Activated T-helper 1 cell treated with anti-CD3 and anti-CD28 coated beads, Interleukin-12 subunit alpha, Interleukin-12 subunit beta, Interleukin-2, Interleukin-4 antibody, amounts not matched to agents 30 ng/mL and 10 ng/mL and 1 ng/mL, durations not matched to agents 14 hours and 24 hours and 36 hours (primary cell): ENCODE measurements at regions of chr1 and their contacts with region 1.

Region 1: DNA sequence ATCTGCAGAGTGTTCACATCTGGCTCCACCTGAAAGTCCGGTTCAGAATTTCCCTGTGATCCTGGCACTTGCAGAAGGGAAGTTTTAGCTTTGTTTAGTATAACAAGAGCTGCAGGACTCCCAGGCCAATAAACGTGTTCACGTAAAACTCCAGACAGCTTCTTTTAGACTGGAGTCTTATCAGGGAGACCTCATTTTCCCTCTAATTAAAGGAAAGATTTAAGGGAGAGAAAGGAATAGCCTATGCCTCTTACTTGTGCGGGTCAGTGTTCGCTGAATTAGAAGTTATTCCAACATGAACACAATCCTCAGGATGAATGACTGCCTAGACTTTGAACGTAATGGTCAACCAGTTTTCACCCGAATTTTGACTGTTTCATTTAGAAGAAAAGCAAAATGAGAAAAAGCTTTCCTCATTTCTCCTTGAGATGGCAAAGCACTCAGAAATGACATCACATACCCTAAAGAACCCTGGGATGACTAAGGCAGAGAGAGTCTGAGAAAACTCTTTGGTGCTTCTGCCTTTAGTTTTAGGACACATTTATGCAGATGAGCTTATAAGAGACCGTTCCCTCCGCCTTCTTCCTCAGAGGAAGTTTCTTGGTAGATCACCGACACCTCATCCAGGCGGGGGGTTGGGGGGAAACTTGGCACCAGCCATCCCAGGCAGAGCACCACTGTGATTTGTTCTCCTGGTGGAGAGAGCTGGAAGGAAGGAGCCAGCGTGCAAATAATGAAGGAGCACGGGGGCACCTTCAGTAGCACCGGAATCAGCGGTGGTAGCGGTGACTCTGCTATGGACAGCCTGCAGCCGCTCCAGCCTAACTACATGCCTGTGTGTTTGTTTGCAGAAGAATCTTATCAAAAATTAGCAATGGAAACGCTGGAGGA is 202.1 kb upstream of the SGIP1 start:
- DNase-seq: peak; percentile 35
- H3K4me3 Mint-ChIP-seq: peak overlapping the region; percentile 98
- H3K27ac Mint-ChIP-seq: peak overlapping the region; percentile 95
- H3K4me1 Mint-ChIP-seq: peaks cover 60% of the 10 kb centered on the region
- H3K27me3 Mint-ChIP-seq: no peaks in the 10 kb centered on the region

Region 2: DNA sequence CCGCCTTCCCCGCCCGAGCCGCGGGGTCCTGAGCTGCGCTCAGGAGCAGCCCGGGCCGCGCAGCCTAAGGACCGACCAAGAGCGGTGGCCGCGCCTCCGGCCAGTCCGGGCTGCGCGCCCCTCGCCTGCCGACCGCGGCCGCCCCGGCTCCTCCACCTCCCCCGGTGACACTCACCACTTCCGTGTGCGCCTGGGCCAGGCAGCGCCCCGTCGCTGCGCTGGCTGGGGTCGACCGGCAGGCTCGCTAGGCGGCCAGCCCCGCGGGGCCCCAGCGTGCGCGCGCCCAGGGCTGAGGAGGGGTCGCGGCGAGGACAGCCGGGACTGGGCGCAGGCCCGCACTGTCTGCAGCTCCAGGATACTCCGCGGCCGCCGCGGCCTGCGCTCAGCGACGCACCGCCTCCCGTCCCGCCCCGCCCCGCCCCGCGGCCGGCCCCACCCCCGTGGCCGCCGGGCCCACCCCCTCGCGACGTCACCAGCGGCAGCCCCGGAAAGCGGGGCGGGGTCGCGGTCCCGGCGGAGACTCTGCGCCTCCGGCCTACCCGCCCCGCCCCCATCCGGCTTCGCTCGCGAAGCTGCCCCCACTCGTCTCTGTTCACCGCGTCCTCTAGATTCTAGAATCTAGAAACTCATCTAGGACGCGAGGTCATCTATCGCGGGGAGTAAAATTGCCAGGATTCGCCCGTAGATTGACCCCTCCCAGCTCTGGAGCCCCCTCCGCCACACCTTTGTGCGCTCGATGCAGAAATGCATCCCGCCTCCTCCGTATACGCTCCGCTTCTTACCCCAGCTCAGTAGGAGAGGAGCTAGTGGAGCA is 1365.5 kb before region 1 on chr1 and contains the start of gene JAK1:
- intact Hi-C with region 1: loop called (anchors 10 kb)
- DNase-seq: peak; percentile 81
- H3K4me3 Mint-ChIP-seq: peak within 1 kb of the TSS; percentile 93
- H3K27ac Mint-ChIP-seq: peak within 1 kb of the TSS; percentile 88
- H3K4me1 Mint-ChIP-seq: peaks cover 55% of the 10 kb centered on the region
- H3K27me3 Mint-ChIP-seq: peaks cover 2% of the 10 kb centered on the region
- total RNA-seq, gene JAK1: 102 TPM in 2 replicates

Region 3: GRCh38 chr1:66271216-66271903 is 60.5 kb before region 1 on chr1:
- intact Hi-C with region 1: loop called (anchors 1 kb)
- DNase-seq: no peak
- H3K4me3 Mint-ChIP-seq: peak overlapping the region; percentile 38
- H3K27ac Mint-ChIP-seq: peak overlapping the region; percentile 85
- H3K4me1 Mint-ChIP-seq: peaks cover 67% of the 10 kb centered on the region
- H3K27me3 Mint-ChIP-seq: peaks cover 2% of the 10 kb centered on the region

Region 4: DNA sequence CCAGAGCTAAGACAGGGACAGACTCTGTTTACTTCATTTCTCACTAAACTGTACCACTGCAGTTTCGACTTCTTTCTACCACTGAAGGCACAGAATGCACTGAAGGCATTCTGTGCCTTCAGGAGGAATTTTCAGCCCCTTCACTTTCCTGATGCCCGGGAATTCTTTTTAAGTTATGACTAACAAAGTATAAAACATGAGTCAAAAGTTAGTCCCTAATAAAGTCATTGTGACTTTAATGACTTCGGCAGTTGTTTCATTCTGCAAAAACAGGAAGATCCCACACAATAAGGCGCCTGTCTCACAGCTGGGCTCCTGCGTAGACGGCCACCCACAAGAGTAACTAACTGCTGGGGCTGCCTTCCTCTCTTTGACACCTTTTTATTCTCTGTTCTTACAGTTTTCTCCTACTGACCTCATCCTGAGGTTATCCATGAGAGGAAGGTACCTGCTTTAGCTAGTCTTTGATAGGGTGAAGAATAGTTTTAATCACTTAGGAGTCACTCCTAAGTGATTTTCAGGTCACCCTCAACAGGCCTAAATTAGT is 18.2 kb after region 1 on chr1:
- intact Hi-C with region 1: loop called (anchors 1 kb)
- DNase-seq: no peak
- H3K4me3 Mint-ChIP-seq: peak overlapping the region; percentile 75
- H3K27ac Mint-ChIP-seq: peak overlapping the region; percentile 81
- H3K4me1 Mint-ChIP-seq: peaks cover 90% of the 10 kb centered on the region
- H3K27me3 Mint-ChIP-seq: no peaks in the 10 kb centered on the region

Region 5: DNA sequence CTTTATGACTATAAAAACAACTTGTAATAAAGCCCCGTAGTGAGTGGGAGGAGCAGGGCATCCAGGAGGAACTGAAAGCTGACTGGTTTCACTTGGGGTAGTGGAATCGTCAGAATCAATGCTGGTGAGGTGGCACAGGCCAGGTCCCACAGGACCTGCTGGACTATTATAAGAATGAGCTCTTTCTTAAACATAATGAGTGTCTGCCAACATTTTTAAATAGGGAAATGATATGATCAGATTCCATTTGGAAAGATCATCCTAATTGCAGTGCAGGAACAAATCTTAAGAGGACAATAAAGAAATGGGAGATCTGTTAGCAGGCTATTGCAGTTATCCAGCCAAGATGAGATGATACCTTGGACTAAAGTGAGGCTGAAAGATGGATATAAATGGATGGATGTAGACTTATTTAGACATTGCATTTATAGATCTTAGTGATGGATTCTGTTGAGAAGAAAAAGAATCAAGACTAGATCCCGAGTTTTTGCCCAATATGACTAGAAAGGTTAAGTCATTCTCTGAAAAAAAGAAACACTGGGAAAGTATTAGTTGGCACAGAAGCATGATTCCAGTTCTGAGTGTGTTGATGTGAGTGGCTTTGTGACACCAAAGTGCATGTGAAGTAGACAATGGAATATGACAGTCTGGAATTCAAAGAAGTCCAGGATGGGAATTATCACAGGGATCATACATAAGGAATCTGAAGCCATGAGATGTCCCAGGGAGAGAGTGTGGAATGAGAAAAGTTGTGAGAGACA is 48.7 kb after region 1 on chr1:
- intact Hi-C with region 1: no loop called
- DNase-seq: no peak
- H3K4me3 Mint-ChIP-seq: peak overlapping the region; percentile 44
- H3K27ac Mint-ChIP-seq: no peak overlapping the region
- H3K4me1 Mint-ChIP-seq: peaks cover 37% of the 10 kb centered on the region
- H3K27me3 Mint-ChIP-seq: no peaks in the 10 kb centered on the region

Region 6: GRCh38 chr1:66436378-66437145 is 104.7 kb after region 1 on chr1:
- intact Hi-C with region 1: loop called (anchors 1 kb)
- DNase-seq: peak; percentile 34
- H3K4me3 Mint-ChIP-seq: no peak overlapping the region
- H3K27ac Mint-ChIP-seq: peak overlapping the region; percentile 2
- H3K4me1 Mint-ChIP-seq: peaks cover 45% of the 10 kb centered on the region
- H3K27me3 Mint-ChIP-seq: no peaks in the 10 kb centered on the region

Region 7: DNA sequence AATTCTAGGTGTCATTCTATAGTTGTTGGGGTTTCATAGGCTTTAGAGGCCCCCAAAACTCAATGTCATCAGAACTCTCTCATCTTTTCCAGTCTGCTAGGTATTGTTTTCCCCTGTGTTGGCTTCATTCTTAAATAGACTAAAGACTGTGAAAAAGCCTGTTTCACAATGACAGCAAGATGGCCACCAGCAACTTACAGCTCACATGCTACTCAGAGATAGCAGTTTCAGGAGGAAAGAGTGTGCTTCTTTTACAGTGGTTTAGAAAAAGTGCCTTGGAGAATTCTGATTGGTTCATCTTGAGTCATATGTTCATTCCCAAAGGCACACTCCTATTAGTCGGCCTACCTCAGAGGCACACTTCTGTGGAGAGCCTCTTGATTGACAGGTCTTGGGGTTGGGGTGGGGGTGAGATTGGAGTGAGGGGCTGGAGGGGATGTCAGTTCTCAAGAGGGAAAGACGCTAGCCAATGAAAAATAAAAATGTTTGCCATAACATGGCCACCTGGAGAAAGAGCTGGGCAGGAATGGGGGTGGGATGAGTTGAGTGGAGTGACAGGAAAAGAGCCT is 842.9 kb after region 1 on chr1:
- intact Hi-C with region 1: loop called (anchors 5 kb)
- DNase-seq: no peak
- H3K4me3 Mint-ChIP-seq: peak overlapping the region; percentile 76
- H3K27ac Mint-ChIP-seq: peak overlapping the region; percentile 98
- H3K4me1 Mint-ChIP-seq: peaks cover 68% of the 10 kb centered on the region
- H3K27me3 Mint-ChIP-seq: no peaks in the 10 kb centered on the region